Dorsolateral prefrontal cortex (tissue), 120 donors: ENCODE measurements at regions of chr16 and their contacts with region 1.

Region 1: GRCh38 chr16:56356276-56357240 is 68.8 kb downstream of the AMFR start:
- DNase-seq: peak; percentile 69 to 85 (median 75)
- H3K4me3 ChIP-seq: peak overlapping the region in 55 of 59 donors; percentile 2 to 59 (median 37)
- H3K27ac ChIP-seq: peak overlapping the region in 58 of 59 donors; percentile 36 to 93 (median 76)
- H3K27me3 ChIP-seq: no peaks in the 10 kb centered on the region
- CTCF ChIP-seq: peak; percentile 59 to 92 (median 82)

Region 2: DNA sequence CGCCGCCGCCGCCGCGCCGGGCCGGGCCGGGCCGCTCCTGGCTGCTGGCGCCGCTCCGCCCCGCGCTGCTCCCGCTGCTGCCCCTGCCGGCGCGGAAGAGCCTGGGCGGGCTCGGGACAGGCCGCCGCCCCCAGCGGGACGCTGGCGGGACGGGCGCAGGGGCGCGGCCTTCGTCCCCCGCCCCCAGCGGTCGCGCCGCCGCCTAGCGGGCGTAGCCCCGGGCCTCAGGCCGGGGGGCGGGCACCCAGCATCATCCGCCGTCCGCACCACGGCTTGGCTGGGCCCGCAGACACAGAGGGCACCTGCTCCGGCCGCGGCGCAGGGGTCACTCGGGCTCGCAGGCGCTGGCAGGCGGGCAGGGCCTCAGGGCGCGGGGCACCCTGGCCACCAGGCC is 68.9 kb after region 1 on chr16 and contains the start of gene AMFR:
- intact Hi-C with region 1: loop called in 1 of 2 experiments (anchors 5 kb)
- DNase-seq: peak in 7 of 10 donors; percentile 28 to 82 (median 49)
- H3K4me3 ChIP-seq: peak within 1 kb of the TSS; percentile 58 to 99 (median 81)
- H3K27ac ChIP-seq: peak within 1 kb of the TSS; percentile 23 to 97 (median 87)
- H3K27me3 ChIP-seq: no peaks in the 10 kb centered on the region
- CTCF ChIP-seq: peak in 55 of 56 donors; percentile 6 to 74 (median 44)
- total RNA-seq, gene AMFR: 103 to 208 (median 129) TPM

Region 3: DNA sequence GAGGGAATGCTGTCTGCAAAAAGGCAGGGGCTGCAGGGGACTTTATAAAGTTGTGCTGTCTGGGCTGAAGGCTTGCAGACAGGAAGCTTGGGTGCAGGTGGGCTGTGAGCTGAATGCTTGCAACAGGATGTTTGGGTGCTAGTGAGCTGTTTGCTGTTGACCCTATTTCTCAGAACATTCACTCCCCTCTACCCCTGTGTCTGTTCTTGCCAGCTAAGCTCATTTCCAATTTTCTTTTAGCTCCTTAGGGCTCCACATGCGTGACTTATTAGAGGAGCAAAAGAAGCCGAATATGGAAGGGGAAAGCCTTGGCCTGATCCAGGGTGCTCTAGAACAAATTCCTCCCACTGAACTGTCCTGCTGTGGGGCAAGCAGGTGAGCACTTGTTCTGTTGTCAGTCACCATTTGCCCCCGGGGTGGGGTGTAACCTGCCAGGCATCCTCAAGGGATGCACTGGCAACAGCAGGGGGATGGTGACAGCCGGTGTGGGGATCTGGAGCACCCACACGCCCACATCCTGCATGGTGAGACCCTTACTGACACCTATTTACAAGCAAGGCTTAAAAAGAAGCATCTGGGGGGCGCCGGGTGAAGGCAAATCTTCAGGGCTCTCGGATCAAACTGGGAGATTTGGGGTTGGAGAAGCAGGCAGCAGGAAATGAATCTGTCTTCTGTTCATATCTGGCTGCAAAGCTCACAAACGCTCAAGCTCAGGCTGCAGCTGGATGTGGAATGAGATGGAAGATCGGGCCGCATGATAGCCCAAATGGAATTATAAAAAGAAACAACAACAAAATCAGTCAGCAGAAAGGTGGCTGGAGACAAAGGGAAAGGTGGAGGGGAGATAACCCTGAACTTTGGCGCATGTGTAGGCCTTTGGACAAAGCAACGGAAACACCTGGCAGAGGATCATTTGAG is 352.2 kb after region 1 on chr16:
- intact Hi-C with region 1: loop called in 1 of 2 experiments (anchors 10 kb)
- DNase-seq: no peak
- H3K4me3 ChIP-seq: no peak overlapping the region
- H3K27ac ChIP-seq: no peak overlapping the region
- H3K27me3 ChIP-seq: no peaks in the 10 kb centered on the region
- CTCF ChIP-seq: no peak